Activated CD4-positive, alpha-beta memory T cell treated with anti-CD3 and anti-CD28 coated beads for 36 hours (primary cell): ENCODE measurements at regions of chr17 and their contacts with region 1.

Region 1: GRCh38 chr17:28951991-28952975 is 965 bp upstream of the PHF12 start:
- DNase-seq: peak; percentile 98
- H3K4me3 Mint-ChIP-seq: no peak overlapping the region
- H3K27ac Mint-ChIP-seq: no peak overlapping the region
- H3K4me1 Mint-ChIP-seq: peaks cover 16% of the 10 kb centered on the region
- H3K27me3 Mint-ChIP-seq: no peaks in the 10 kb centered on the region

Region 2: DNA sequence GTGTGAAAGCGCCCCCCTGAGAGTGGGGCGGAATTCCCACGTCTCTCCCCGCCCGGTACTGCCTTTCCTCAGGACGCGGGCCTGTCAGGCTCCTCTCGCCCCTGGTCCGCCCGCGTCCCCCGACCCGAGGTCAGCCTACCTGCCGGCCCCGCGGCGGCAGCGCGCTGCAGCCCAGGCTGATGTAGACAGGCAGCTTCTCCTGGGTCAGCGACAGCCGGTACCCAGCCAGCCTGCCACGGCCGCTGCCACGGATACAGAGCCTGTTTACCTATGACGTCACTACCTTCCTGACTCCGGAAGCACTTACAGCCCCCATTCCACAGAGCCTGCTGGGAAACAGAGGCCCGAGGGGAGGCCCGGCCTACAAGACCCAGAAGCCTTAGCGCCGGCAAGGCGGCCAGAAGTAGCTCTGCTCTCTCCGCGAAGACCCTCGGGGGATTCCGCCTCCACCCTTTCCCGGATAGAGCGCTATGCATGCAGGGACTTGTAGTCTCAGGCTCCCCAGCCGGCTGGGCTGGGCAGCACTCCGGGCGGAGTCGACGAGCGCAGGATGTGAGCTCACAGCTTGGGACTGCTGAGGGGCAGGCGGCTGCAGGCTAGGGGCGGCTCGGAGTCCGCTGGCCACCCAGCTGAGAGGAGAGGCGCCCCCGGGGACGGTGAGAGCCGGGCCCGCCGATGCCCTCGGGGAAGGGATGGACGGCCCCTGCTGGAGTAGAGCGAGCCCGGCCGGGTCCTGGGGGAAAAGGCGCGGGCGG is 616.9 kb before region 1 on chr17 and contains the starts of genes IFT20 and TNFAIP1:
- CTCF ChIA-PET with region 1: no interaction called
- POLR2A ChIA-PET with region 1: no interaction called
- intact Hi-C with region 1: loop called (anchors 1 kb)
- DNase-seq: peak; percentile 99
- H3K4me3 Mint-ChIP-seq: peak within 1 kb of the TSS; percentile 94
- H3K27ac Mint-ChIP-seq: peak within 1 kb of the TSS; percentile 87
- H3K4me1 Mint-ChIP-seq: peaks cover 36% of the 10 kb centered on the region
- H3K27me3 Mint-ChIP-seq: no peaks in the 10 kb centered on the region
- total RNA-seq, gene IFT20: 20.3 to 20.6 TPM
- total RNA-seq, gene TNFAIP1: 24.4 to 27.3 TPM

Region 3: DNA sequence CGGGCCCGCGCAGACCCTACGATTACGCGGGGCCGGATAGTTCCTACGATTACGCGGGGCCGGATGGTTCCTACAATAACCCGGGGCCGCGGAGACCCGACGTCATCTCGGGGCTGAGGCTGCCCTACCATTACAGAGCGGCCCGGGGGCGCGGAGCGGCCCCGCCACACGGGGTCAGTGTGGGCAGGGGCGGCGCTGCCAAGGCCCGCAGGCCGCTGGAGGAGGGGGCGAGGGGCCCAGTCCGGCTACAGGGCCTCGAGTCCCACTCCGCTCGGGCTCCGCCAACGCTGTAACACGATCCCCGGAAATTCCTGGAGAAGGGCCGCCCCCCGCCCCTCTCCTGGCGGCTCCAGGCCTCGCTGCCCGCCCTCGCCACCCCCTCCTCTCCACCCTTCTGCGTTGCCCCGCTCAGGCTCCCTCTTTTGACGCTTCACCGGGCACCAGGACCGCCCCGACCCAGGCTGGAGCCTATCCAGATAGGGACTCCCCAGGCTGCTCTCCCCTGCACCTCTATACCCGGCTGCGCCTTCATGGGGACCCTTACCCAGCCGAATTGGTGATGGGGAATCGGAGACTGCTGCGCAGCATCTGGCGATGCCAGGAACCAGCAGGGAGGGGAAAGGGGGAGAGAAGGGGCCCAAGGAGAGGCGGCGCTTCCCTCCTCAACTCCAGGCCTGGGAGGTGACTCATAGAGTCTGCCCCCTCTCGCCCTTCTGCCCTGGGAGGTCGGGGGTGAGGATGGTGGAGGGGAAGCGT is 234.5 kb before region 1 on chr17 and contains the start of gene RAB34:
- CTCF ChIA-PET with region 1: interaction called, 4 read pairs
- POLR2A ChIA-PET with region 1: interaction called, 15 read pairs
- intact Hi-C with region 1: loop called (anchors 1 kb)
- DNase-seq: peak; percentile 20
- H3K4me3 Mint-ChIP-seq: peak within 1 kb of the TSS; percentile 14
- H3K27ac Mint-ChIP-seq: peak within 1 kb of the TSS; percentile 71
- H3K4me1 Mint-ChIP-seq: peaks cover 30% of the 10 kb centered on the region
- H3K27me3 Mint-ChIP-seq: peaks cover 16% of the 10 kb centered on the region
- total RNA-seq, gene RAB34: 4.9 to 6.6 TPM

Region 4: DNA sequence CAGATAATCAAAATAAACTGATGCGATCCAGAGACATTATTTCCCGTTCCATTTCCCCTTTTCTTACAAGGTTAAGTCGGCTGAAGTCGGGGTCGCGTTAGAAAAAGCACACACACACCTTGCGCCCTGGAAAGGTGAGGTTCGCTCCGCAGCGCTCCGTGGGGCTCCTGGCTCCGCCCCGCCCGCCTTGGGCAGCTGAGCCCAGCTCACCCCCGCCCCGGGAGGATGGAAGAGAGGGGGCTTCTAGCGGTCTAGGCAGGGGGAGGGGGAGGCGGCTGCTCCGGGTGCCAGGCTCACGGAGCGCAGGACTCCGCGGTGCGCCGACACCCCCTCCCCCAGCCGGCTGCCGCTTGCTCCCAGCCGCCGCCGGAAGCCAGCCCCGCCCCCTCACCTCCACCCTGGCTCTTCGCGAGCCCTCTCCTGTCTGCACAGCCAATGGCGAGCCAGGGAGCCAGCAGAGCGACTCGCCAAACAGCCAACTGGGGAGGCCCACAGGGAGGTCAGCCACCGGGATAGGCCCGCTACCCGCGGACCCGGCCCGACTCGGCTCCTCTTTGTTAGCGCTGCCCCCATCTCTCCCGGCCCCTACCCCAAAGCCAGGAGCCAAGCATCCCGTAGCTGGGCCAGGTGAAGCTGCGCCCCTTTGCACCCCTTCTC is 140.1 kb before region 1 on chr17:
- CTCF ChIA-PET with region 1: interaction called, 8 read pairs
- POLR2A ChIA-PET with region 1: interaction called, 3 read pairs
- intact Hi-C with region 1: loop called (anchors 1 kb)
- DNase-seq: peak; percentile 98
- H3K4me3 Mint-ChIP-seq: peak overlapping the region; percentile 82
- H3K27ac Mint-ChIP-seq: peak overlapping the region; percentile 92
- H3K4me1 Mint-ChIP-seq: peaks cover 43% of the 10 kb centered on the region
- H3K27me3 Mint-ChIP-seq: no peaks in the 10 kb centered on the region

Region 5: DNA sequence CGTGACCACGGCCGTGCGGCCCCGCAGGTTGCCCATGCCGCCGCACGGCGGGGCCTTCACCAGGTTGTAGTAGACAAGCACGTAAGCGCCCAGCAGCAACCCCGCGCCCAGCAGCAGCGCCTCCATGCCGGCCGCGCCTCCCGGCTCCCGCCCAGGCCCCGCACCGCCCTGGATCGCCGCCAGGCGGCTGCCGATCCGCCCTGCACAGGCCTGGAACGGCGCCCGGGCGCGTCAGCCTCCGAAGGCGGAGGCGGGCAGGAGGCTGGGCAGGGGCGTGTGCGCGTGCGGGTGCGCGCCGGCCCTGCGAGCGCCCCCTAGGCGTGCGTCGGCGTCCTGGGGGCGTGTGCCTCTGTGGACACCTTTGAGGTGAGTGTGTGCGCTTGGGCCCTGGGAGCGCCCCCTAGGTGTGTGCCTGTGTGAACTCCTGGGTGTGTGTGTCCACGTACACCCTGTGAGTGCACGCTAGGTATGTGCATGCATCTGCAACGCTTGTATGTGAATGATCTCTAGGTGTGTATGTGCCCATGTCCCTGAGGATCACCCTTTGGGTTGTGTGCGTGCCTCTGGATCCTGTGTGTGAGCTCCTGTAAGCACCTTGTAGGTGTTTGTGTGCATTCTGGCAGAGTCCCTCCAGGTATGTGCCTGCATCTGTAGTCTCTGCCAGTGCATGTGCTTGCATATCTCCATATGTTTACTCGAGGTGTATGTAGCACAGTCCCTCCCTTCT is 49.3 kb before region 1 on chr17 and contains the start of gene DHRS13:
- CTCF ChIA-PET with region 1: interaction called, 15 read pairs
- POLR2A ChIA-PET with region 1: interaction called, 10 read pairs
- intact Hi-C with region 1: loop called (anchors 1 kb)
- DNase-seq: peak; percentile 94
- H3K4me3 Mint-ChIP-seq: peak within 1 kb of the TSS; percentile 97
- H3K27ac Mint-ChIP-seq: peak within 1 kb of the TSS; percentile 89
- H3K4me1 Mint-ChIP-seq: peaks cover 27% of the 10 kb centered on the region
- H3K27me3 Mint-ChIP-seq: no peaks in the 10 kb centered on the region
- total RNA-seq, gene DHRS13: 18.0 to 20.6 TPM

Region 6: GRCh38 chr17:28967221-28968140 is 15.2 kb after region 1 on chr17:
- CTCF ChIA-PET with region 1: interaction called, 45 read pairs
- POLR2A ChIA-PET with region 1: interaction called, 4 read pairs
- intact Hi-C with region 1: no loop called
- DNase-seq: no peak
- H3K4me3 Mint-ChIP-seq: no peak overlapping the region
- H3K27ac Mint-ChIP-seq: no peak overlapping the region
- H3K4me1 Mint-ChIP-seq: no peaks in the 10 kb centered on the region
- H3K27me3 Mint-ChIP-seq: peaks cover 13% of the 10 kb centered on the region

Region 7: DNA sequence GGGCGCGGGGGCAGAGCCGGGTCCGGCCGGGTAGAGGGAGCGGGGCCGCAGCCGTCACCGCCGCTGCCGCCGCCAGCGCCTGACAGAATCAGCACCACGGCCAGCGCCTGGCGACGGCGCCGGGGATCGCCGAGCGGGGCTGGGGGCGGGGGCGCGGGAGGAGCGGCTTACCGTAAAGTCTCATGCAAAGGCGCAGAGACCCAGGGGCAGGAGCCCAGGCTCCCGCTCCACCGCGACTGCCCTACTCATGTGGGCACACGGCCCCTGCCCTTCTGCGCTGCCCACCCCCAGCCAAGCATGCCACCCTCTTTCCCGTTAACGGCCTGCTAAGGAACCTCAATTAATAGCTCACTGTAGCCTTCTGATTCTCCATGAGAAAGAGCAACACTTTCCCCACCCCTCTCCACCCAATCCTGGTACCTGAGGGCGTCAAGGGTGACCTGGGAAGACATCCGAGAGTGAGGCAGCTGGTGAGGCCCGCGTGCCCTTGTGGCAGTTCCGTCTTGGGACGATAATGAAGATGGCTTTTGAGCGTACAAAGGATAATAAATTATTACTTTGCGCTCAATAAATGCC is 53.7 kb after region 1 on chr17 and contains the start of gene SEZ6:
- CTCF ChIA-PET with region 1: no interaction called
- POLR2A ChIA-PET with region 1: no interaction called
- intact Hi-C with region 1: no loop called
- DNase-seq: peak; percentile 80
- H3K4me3 Mint-ChIP-seq: no peak within 1 kb of the TSS
- H3K27ac Mint-ChIP-seq: no peak within 1 kb of the TSS
- H3K4me1 Mint-ChIP-seq: peaks cover 3% of the 10 kb centered on the region
- H3K27me3 Mint-ChIP-seq: peaks cover 52% of the 10 kb centered on the region
- total RNA-seq, gene SEZ6: not detected

Region 8: DNA sequence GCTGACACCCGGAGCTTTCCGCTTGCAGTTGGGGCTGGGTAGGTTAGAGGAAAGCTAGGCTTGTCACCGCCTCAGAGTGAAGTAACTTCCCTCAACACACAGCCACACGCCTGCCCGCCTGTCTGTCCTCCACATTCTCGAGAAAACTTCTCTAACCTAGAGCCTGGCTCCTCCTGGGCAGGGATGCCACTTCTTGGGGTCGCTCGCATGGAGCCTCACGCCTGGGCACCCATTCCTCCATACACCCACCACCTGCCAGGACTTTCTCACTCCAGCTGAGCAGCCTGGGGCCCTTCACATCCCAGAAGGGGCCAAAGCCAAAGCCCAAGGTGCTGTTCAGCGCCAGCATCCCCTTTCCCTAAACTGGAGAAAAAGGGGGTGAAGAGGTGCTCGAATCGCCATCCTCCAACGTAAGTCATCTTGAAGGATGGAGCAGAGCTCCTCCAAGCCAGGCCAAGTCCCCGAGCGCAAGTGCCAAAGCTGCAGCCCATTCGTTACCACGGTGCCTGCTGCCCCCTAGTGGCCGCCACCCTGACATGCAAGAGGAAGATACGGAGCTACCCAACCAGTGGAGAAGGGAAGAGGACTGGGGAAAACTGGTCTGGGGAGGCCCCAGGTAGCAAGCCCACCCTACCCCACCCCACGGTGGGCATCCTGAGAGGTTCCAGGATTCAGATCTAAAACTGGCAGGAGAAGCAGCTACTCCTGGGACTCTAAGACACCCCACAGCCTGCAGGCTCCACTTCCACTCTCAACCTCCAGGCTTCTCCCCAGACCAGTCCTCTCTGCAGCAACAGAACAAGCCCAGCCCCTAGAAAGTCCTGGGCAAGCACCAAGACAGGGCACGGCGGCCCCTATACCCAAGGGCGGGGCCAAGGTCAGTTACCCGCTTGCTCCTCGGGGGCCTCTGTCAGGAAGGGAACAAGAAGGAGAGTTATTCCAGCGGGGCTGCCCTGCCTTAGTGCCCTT is 164.8 kb after region 1 on chr17:
- CTCF ChIA-PET with region 1: interaction called, 36 read pairs
- POLR2A ChIA-PET with region 1: no interaction called
- intact Hi-C with region 1: loop called (anchors 5 kb)
- DNase-seq: peak; percentile 87
- H3K4me3 Mint-ChIP-seq: no peak overlapping the region
- H3K27ac Mint-ChIP-seq: no peak overlapping the region
- H3K4me1 Mint-ChIP-seq: peaks cover 4% of the 10 kb centered on the region
- H3K27me3 Mint-ChIP-seq: no peaks in the 10 kb centered on the region